Ascending aorta (tissue), 2 donors: ENCODE measurements at regions of chr5 and their contacts with region 1.

Region 1: DNA sequence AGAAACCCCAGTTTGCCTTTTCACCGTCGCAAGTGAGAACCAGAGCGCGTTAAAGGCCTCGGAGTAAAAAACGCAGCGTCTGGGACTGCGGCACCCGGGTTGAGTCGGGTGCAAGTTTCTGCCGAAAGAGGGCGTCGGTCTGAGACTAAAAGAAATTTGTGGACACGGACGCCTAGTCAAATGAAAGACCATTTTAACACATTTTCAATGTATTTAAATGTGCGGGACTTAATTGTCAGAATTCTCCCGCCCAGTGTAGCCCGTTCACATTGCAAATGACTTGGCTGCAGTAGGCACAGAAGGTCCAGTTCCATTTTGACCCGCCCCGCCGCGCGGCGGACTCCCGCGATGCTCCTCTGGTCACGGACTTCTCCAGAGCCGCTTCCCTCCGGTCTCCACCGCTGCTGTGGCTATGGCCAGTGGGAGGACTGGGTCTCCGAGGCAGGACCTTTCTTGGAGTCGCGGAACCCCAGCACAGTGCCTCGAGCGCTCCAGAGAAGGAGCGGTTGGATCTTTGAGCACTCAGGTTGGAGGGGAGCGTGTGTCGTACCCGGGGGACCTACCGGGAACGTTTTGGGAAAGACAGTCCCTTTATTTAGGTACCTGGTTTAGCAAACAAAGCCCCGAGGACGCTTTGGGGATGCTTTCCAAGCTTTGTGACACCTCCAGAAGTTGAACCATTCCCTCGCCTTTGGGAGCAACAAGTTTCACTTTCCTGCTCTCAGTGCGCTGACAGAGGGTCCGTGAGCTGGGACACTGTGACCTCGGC is 1.2 kb upstream of the NPR3 start:
- DNase-seq: peak in 1 of 2 donors; percentile 84
- H3K4me3 ChIP-seq: peak overlapping the region; percentile 71 to 85
- H3K27ac ChIP-seq: peak overlapping the region; percentile 94 to 97
- H3K4me1 ChIP-seq: peaks cover 4 to 5% of the 10 kb centered on the region in 2 donors
- H3K27me3 ChIP-seq: no peaks in the 10 kb centered on the region
- CTCF ChIP-seq: peak; percentile 62 to 78 (median 64)

Region 2: DNA sequence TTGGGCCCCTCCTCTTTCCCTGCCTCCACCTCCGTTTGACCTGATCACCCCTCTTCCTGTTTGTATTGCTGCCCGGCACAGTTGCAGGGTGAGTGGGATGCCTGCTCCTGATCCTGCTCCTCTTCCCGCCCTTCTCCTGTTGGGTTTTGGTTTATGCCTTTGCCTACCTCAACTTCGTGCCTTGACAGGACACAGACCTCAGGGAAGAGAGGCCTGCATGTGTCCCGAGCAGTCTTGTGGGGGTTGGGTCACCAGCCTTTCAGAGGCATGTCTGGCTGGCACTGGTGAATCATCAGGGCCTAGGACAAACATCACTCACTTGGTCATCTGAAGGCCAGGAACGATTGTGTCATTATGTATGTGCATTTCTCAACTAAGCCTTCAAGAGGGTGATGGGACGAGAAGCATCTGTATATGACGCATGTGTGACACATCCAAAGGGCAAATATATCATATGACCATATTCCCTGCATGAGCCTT is 58.0 kb after region 1 on chr5:
- intact Hi-C with region 1: no loop called
- DNase-seq: peak; percentile 28 to 79
- H3K4me3 ChIP-seq: no peak overlapping the region
- H3K27ac ChIP-seq: peak overlapping the region in 1 of 2 donors; percentile 7
- H3K4me1 ChIP-seq: no peaks in the 10 kb centered on the region
- H3K27me3 ChIP-seq: no peaks in the 10 kb centered on the region
- CTCF ChIP-seq: no peak

Region 3: GRCh38 chr5:32810804-32811203 is 100.8 kb after region 1 on chr5:
- intact Hi-C with region 1: loop called (anchors 2 kb)
- DNase-seq: peak in 1 of 2 donors; percentile 82
- H3K4me3 ChIP-seq: no peak overlapping the region
- H3K27ac ChIP-seq: peak overlapping the region in 1 of 2 donors; percentile 64
- H3K4me1 ChIP-seq: peaks cover 0 to 25% of the 10 kb centered on the region in 2 donors
- H3K27me3 ChIP-seq: no peaks in the 10 kb centered on the region
- CTCF ChIP-seq: no peak

Region 4: GRCh38 chr5:32852535-32852934 is 142.6 kb after region 1 on chr5:
- intact Hi-C with region 1: loop called (anchors 1 kb)
- DNase-seq: peak in 1 of 2 donors; percentile 75
- H3K4me3 ChIP-seq: peak overlapping the region in 1 of 2 donors; percentile 31
- H3K27ac ChIP-seq: peak overlapping the region; percentile 49 to 61
- H3K4me1 ChIP-seq: peaks cover 0 to 7% of the 10 kb centered on the region in 2 donors
- H3K27me3 ChIP-seq: no peaks in the 10 kb centered on the region
- CTCF ChIP-seq: peak; percentile 25 to 58 (median 30)

Region 5: DNA sequence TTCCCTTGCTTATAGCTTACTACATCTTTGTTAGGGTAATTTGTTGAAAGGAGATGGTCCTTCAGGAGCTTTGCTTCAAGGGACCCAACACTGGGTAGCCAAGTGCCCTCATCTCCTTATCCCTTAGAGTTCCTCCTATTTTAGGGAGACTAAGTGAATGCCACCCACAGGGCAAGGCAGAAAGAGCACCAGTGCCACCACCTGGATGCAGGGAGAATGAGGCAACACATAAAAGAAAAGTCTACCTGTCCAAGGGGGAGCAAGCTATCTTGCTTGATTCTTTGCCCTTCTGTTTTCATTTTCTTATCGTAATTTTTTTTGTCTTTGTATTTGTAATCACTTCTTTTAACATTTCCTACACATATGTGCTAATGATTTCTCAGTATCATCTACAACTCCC is 206.7 kb after region 1 on chr5:
- intact Hi-C with region 1: loop called (anchors 1 kb)
- DNase-seq: peak in 1 of 2 donors; percentile 65
- H3K4me3 ChIP-seq: no peak overlapping the region
- H3K27ac ChIP-seq: no peak overlapping the region
- H3K4me1 ChIP-seq: no peaks in the 10 kb centered on the region
- H3K27me3 ChIP-seq: no peaks in the 10 kb centered on the region
- CTCF ChIP-seq: peak; percentile 25 to 61 (median 39)

Region 6: GRCh38 chr5:33180900-33181299 is 470.9 kb after region 1 on chr5:
- intact Hi-C with region 1: loop called (anchors 5 kb)
- DNase-seq: no peak
- H3K4me3 ChIP-seq: no peak overlapping the region
- H3K27ac ChIP-seq: no peak overlapping the region
- H3K4me1 ChIP-seq: no peaks in the 10 kb centered on the region
- H3K27me3 ChIP-seq: no peaks in the 10 kb centered on the region
- CTCF ChIP-seq: peak; percentile 24 to 46 (median 29)

Region 7: GRCh38 chr5:33299621-33300208 is 589.8 kb after region 1 on chr5:
- intact Hi-C with region 1: loop called (anchors 5 kb)
- DNase-seq: no peak
- H3K4me3 ChIP-seq: peak overlapping the region in 1 of 2 donors; percentile 22
- H3K27ac ChIP-seq: peak overlapping the region; percentile 66 to 79
- H3K4me1 ChIP-seq: no peaks in the 10 kb centered on the region
- H3K27me3 ChIP-seq: no peaks in the 10 kb centered on the region
- CTCF ChIP-seq: peak; percentile 12 to 66 (median 29)

Region 8: GRCh38 chr5:33423018-33423630 is 713.2 kb after region 1 on chr5:
- intact Hi-C with region 1: loop called (anchors 5 kb)
- DNase-seq: no peak
- H3K4me3 ChIP-seq: no peak overlapping the region
- H3K27ac ChIP-seq: no peak overlapping the region
- H3K4me1 ChIP-seq: no peaks in the 10 kb centered on the region
- H3K27me3 ChIP-seq: no peaks in the 10 kb centered on the region
- CTCF ChIP-seq: peak; percentile 38 to 56 (median 55)